ENCODE measurements at regions of chr2 and their contacts with region 1.

Region 1: GRCh38 chr2:240615820-240616547 is 9.3 kb upstream of the GPR35 start:
- DNase-seq: peak in 3 of 5 donors; percentile 11 to 44 (median 19)
- H3K4me3 ChIP-seq: no peak overlapping the region
- H3K27ac ChIP-seq: no peak overlapping the region
- H3K4me1 ChIP-seq: no peaks in the 10 kb centered on the region
- H3K27me3 ChIP-seq: no peaks in the 10 kb centered on the region
- CTCF ChIP-seq: no peak
- EP300 ChIP-seq: no peak
- POLR2A ChIP-seq: no peak

Region 2: DNA sequence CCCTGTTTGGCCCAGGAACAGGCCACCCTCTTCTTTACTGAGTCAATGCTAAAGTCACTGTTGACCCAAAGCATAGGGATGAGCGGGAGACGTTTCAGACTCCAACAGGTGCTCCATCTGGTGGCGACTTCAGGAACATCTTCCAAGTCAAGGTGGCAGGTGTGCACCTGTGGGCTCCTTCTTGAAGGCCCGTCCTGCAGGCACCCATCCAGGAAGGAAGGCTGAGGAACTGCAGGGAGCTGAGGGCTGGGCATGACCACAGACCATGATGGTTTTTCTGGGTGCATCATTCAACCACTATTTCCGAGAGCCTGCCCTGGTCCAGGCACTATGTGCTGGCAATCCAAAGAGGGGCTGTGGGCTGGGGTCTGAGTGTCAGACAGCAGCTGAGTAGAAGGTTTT is 733.7 kb before region 1 on chr2:
- intact Hi-C with region 1: no loop called
- DNase-seq: peak; percentile 42 to 64 (median 53)
- H3K4me3 ChIP-seq: no peak overlapping the region
- H3K27ac ChIP-seq: peak overlapping the region in 1 of 2 donors; percentile 40
- H3K4me1 ChIP-seq: peaks cover 8% of the 10 kb centered on the region
- H3K27me3 ChIP-seq: no peaks in the 10 kb centered on the region
- CTCF ChIP-seq: peak; percentile 30 to 56 (median 42)
- EP300 ChIP-seq: no peak
- POLR2A ChIP-seq: no peak

Region 3: GRCh38 chr2:240499309-240500301 is 116.4 kb before region 1 on chr2:
- intact Hi-C with region 1: loop called in 1 of 4 experiments (anchors 10 kb)
- DNase-seq: no peak
- H3K4me3 ChIP-seq: no peak overlapping the region
- H3K27ac ChIP-seq: no peak overlapping the region
- H3K4me1 ChIP-seq: no peaks in the 10 kb centered on the region
- H3K27me3 ChIP-seq: no peaks in the 10 kb centered on the region
- CTCF ChIP-seq: no peak
- EP300 ChIP-seq: no peak
- POLR2A ChIP-seq: no peak

Region 4: GRCh38 chr2:240791821-240792628 is 176.0 kb after region 1 on chr2:
- intact Hi-C with region 1: no loop called
- DNase-seq: peak; percentile 58 to 82 (median 75)
- H3K4me3 ChIP-seq: no peak overlapping the region
- H3K27ac ChIP-seq: peak overlapping the region in 1 of 2 donors; percentile 72
- H3K4me1 ChIP-seq: no peaks in the 10 kb centered on the region
- H3K27me3 ChIP-seq: no peaks in the 10 kb centered on the region
- CTCF ChIP-seq: no peak
- EP300 ChIP-seq: no peak
- POLR2A ChIP-seq: no peak